CD4-positive, alpha-beta T cell (primary cell): ENCODE measurements at regions of chr7 and their contacts with region 1.

Region 1: DNA sequence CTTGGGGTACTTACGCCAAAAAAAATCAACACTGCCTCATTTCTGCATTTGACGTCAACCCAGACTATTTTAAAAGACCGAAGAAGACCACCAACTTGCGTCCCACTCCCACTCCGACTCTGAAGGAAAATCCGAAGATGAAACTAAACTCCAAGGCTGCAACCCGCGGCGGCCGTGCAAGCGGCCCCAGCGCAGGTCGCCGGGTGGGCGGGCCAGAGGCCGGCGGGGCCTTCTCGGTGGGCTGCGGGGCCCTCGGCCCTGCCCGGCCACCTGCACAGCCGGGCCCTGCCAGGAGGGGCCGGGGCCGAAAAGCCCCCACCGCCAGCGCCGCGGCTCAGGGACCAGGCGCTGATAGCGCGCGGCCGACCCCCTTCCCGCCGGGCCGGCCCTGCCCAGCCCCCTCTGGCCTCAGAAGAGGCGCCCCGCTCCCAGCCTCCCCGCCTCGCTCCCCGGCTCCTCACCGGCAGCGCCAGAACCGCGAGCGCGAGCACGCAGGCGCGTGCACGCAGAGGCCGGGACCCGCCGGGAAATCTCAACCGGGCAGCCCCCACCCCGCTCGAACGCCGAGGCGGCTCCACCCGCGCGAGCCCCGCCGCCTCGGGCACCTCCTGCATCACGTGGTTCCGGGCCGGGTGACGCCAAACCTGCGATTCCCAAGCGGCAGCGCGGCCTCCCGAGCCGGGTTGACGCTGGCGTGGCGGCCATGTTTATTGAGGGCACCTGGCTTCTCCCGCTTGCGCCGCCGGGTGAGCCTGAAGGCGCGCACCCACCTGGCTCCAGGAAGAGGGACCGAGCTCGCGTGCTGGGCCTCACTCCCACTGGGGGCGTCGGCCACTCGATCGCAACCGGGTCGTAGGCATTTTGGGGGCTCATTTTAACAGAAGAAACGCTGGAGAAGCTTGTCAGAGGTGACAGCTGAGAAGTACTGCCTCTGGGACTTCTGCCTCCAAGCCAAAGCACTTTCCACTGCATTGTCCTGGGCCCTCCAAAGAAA is at the start of gene C7orf25:
- DNase-seq: peak; percentile 89 to 98 (median 95)
- ATAC-seq: peak; percentile 95
- H3K4me3 ChIP-seq: peak within 1 kb of the TSS; percentile 69
- H3K4me3 Mint-ChIP-seq: peak within 1 kb of the TSS; percentile 93
- H3K27ac ChIP-seq: peak within 1 kb of the TSS in 1 of 2 donors; percentile 61
- H3K27ac Mint-ChIP-seq: peak within 1 kb of the TSS; percentile 86
- H3K4me1 ChIP-seq: peaks cover 21% of the 10 kb centered on the region
- H3K4me1 Mint-ChIP-seq: peaks cover 47% of the 10 kb centered on the region
- H3K27me3 ChIP-seq: no peaks in the 10 kb centered on the region
- H3K27me3 Mint-ChIP-seq: no peaks in the 10 kb centered on the region
- CTCF ChIP-seq: no peak
- total RNA-seq, gene C7orf25: 2.1 to 3.7 TPM

Region 2: GRCh38 chr7:42869131-42870020 is 42.4 kb before region 1 on chr7:
- CTCF ChIA-PET with region 1: no interaction called
- POLR2A ChIA-PET with region 1: no interaction called
- intact Hi-C with region 1: no loop called
- DNase-seq: no peak
- ATAC-seq: no peak
- H3K4me3 ChIP-seq: no peak overlapping the region
- H3K4me3 Mint-ChIP-seq: no peak overlapping the region
- H3K27ac ChIP-seq: no peak overlapping the region
- H3K27ac Mint-ChIP-seq: no peak overlapping the region
- H3K4me1 ChIP-seq: no peaks in the 10 kb centered on the region
- H3K4me1 Mint-ChIP-seq: peaks cover 7% of the 10 kb centered on the region
- H3K27me3 ChIP-seq: peaks cover 0 to 5% of the 10 kb centered on the region in 2 experiments
- H3K27me3 Mint-ChIP-seq: peaks cover 18% of the 10 kb centered on the region
- CTCF ChIP-seq: no peak

Region 3: DNA sequence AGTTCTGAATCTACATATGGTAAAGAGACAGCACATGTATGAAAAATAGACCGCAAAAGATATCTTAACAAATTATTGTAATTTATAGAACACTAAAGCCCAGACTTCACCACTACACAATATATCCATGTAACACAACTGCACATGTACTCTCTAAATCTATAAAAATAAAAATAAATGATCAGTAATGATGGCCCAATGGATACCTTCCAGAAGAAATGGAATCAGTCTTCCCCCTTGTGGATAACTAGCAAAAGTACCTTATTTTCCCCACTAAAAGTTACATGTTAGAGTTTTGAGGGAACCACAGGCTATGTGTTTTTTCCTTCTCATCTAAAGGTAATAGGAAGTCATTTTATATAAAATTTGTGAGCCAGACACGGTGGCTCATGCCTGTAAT is 25.6 kb before region 1 on chr7:
- CTCF ChIA-PET with region 1: no interaction called
- POLR2A ChIA-PET with region 1: interaction called, 14 read pairs
- intact Hi-C with region 1: loop called (anchors 2 kb)
- DNase-seq: no peak
- ATAC-seq: no peak
- H3K4me3 ChIP-seq: no peak overlapping the region
- H3K4me3 Mint-ChIP-seq: peak overlapping the region; percentile 35
- H3K27ac ChIP-seq: no peak overlapping the region
- H3K27ac Mint-ChIP-seq: peak overlapping the region; percentile 49
- H3K4me1 ChIP-seq: peaks cover 18% of the 10 kb centered on the region
- H3K4me1 Mint-ChIP-seq: peaks cover 27% of the 10 kb centered on the region
- H3K27me3 ChIP-seq: peaks cover 0 to 5% of the 10 kb centered on the region in 2 experiments
- H3K27me3 Mint-ChIP-seq: no peaks in the 10 kb centered on the region
- CTCF ChIP-seq: no peak

Region 4: DNA sequence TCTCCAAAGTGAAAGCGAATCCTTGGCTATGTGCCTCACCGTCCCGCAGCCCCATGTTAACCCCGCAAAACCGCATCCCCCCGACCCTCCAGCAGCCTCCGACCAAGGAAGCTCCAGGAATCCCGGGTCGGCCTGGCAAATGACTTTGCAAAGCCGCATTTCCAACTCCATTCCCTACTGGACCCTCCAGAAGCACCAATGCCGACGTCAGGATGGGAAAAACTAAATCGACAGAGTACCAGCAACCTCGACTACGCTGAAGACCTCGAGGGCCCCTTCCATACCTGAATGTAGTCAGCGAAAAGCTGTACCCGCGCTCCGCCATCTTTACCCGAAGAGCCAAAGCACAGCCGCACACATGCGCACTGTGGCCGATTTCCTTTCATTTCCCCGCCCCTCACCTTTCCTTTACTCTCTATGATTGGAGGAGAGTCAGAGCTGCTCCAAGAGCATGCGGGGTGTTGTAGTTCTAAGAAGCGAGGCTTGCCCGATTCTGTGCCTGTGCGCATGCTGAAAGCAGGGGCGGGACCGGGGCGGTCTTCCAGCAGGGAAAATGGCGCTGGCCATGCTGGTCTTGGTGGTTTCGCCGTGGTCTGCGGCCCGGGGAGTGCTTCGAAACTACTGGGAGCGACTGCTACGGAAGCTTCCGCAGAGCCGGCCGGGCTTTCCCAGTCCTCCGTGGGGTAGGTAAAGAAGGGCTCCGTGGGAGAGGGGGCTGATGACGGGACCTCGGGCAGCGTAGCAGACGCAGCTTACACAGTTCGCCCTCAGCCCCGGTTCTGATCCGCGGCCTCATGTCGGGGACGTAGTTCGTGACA is 20.3 kb after region 1 on chr7 and contains the starts of genes MRPL32 and PSMA2:
- CTCF ChIA-PET with region 1: interaction called, 5 read pairs
- POLR2A ChIA-PET with region 1: interaction called, 79 read pairs
- intact Hi-C with region 1: loop called (anchors 1 kb)
- DNase-seq: peak; percentile 88 to 98 (median 91)
- ATAC-seq: peak; percentile 98
- H3K4me3 ChIP-seq: peak within 1 kb of the TSS; percentile 87
- H3K4me3 Mint-ChIP-seq: peak within 1 kb of the TSS; percentile 92
- H3K27ac ChIP-seq: peak within 1 kb of the TSS; percentile 74 to 87
- H3K27ac Mint-ChIP-seq: peak within 1 kb of the TSS; percentile 92
- H3K4me1 ChIP-seq: peaks cover 28% of the 10 kb centered on the region
- H3K4me1 Mint-ChIP-seq: peaks cover 79% of the 10 kb centered on the region
- H3K27me3 ChIP-seq: no peaks in the 10 kb centered on the region
- H3K27me3 Mint-ChIP-seq: no peaks in the 10 kb centered on the region
- CTCF ChIP-seq: no peak
- total RNA-seq, gene MRPL32: 57.1 to 60.7 TPM
- total RNA-seq, gene PSMA2: 38.8 to 41.0 TPM